A673 (cell line): ENCODE measurements at regions of chr7 and their contacts with region 1.

Region 1: DNA sequence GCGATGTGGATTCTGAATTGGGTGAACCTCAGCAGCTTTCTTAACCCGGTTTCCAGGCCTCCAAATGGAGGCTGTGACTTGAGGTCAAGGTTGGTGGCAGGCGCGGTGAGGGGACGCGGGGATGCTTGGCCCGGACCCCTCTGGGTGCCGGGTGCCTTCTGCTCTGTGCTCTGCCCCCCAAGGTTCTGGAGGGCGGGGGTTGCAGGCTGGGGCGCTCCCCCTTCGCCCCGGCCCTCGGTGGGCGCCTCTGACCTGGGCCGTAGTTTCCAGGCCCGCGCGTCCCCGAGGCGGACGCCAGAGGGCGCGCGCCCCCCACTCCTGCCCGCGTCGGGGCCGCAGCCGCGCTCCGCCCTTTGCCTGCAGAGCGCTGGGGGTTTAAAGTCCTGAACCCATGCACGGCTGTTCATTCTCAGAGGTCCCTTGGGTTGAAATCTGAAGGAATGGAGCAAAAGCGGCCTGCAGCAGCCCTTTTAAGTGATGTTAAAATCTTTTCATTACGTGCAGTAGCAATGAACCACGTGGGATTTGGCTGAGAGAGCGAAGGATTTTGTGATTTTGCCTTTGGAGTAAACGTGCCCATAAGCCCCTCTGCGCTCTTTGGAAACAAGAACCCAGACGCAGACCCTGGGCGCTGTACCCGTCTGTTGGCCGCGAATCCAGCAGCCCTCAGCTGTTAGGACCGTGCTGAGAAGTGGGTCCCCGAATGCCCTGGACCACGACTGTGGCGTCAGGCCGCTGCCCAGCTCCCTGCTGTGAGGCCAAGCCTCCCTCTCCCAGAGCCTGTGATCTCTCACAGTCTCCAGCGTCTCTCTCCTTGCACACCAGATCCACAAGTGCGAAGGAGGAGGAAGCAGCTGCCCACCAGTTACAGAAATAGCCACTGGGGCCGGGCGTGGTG is 135.0 kb downstream of the ACTR3B start:
- DNase-seq: peak; percentile 44
- H3K4me3 ChIP-seq: no peak overlapping the region
- H3K27ac ChIP-seq: no peak overlapping the region
- H3K4me1 ChIP-seq: peaks cover 1% of the 10 kb centered on the region
- H3K27me3 ChIP-seq: peaks cover 10% of the 10 kb centered on the region
- CTCF ChIP-seq: peak; percentile 73

Region 2: DNA sequence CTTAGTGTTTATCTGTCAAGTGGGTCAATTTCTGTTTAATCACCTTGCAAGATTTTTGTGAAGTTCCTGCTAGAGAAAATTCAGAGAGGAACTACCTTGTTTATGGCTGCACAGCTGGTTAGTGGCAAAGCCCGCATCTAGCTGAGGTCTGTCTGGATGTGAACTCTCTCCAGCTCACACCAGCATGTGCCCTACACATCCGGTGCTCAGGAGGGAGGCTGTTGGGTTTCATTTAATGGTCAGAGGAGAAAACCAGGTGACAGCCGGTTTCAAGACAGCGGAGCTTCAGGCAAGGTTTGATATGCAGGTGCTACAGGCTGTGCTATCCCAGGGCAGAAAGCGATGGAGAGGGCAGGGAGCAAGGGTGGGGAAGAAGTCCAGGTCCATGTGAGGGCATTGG is 216.1 kb after region 1 on chr7:
- CTCF ChIA-PET with region 1: no interaction called
- POLR2A ChIA-PET with region 1: no interaction called
- intact Hi-C with region 1: no loop called
- DNase-seq: no peak
- H3K4me3 ChIP-seq: no peak overlapping the region
- H3K27ac ChIP-seq: no peak overlapping the region
- H3K4me1 ChIP-seq: no peaks in the 10 kb centered on the region
- H3K27me3 ChIP-seq: peaks cover 10% of the 10 kb centered on the region
- CTCF ChIP-seq: no peak

Region 3: DNA sequence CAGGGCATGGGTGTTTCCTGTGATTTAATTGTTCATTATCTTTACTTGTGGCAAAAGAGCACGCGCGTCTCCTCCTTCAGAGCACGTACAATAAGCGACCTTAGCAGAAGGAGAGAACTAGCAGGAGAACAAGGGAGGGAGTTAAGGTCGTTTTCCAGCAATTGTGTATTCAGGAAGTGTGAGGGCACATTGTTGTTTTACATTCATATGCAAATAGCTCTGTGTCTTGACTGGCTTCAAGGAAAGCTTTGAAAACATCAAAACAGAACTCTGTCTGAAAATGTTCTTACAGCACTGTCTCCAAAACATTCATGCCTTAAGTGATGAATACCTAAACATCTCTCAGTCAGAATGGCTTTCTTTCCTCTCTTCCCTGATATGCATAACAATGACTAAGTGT is 364.2 kb after region 1 on chr7:
- CTCF ChIA-PET with region 1: no interaction called
- POLR2A ChIA-PET with region 1: no interaction called
- intact Hi-C with region 1: no loop called
- DNase-seq: no peak
- H3K4me3 ChIP-seq: no peak overlapping the region
- H3K27ac ChIP-seq: no peak overlapping the region
- H3K4me1 ChIP-seq: no peaks in the 10 kb centered on the region
- H3K27me3 ChIP-seq: no peaks in the 10 kb centered on the region
- CTCF ChIP-seq: no peak

Region 4: GRCh38 chr7:154503962-154504550 is 1609.5 kb after region 1 on chr7:
- CTCF ChIA-PET with region 1: no interaction called
- POLR2A ChIA-PET with region 1: no interaction called
- intact Hi-C with region 1: loop called (anchors 5 kb)
- DNase-seq: peak; percentile 55
- H3K4me3 ChIP-seq: no peak overlapping the region
- H3K27ac ChIP-seq: no peak overlapping the region
- H3K4me1 ChIP-seq: no peaks in the 10 kb centered on the region
- H3K27me3 ChIP-seq: no peaks in the 10 kb centered on the region
- CTCF ChIP-seq: peak; percentile 71

Region 5: DNA sequence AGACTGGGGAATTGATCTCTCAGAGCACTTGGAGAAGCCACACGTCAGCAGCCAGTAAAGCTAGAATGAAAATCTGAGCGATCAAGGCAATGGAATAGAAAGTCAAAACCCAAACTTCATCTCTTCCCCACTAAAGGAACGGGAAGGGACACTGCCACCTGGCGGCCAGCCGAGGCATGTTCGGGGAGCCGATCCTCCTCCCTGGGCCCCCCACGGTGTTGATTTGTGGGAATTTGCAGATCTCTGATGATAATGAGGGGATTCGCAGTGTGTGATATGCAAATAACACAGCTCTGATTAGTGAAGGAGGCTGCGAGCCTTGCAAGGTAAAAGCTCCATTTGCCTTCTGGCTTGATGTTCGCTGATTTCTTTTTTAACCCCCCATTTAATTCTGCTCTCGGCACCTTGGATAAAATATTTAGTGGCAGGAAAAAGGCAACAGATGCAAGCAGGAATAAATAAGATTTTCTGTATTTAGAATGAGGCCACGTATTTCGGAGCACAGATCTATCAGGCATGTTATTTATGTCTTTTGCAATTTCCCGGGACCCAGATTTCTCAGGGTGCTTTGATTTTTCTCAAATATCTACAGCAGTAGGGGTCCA is 1849.8 kb after region 1 on chr7:
- CTCF ChIA-PET with region 1: no interaction called
- POLR2A ChIA-PET with region 1: no interaction called
- intact Hi-C with region 1: loop called (anchors 10 kb)
- DNase-seq: peak; percentile 64
- H3K4me3 ChIP-seq: no peak overlapping the region
- H3K27ac ChIP-seq: no peak overlapping the region
- H3K4me1 ChIP-seq: no peaks in the 10 kb centered on the region
- H3K27me3 ChIP-seq: peaks cover 53% of the 10 kb centered on the region
- CTCF ChIP-seq: peak; percentile 91